ENCODE measurements at regions of chrX and their contacts with region 1.

Region 1: GRCh38 chrX:19840899-19841648 is 46.3 kb downstream of the SH3KBP1 start:
- DNase-seq: peak in 7 of 9 donors; percentile 12 to 48 (median 37)
- ATAC-seq: peak; percentile 87
- H3K4me3 ChIP-seq: peak overlapping the region; percentile 11
- H3K4me3 Mint-ChIP-seq: peak overlapping the region; percentile 22 to 87 (median 78)
- H3K27ac ChIP-seq: peak overlapping the region; percentile 32
- H3K27ac Mint-ChIP-seq: peak overlapping the region; percentile 73 to 94 (median 88)
- H3K4me1 ChIP-seq: peaks cover 7 to 22% of the 10 kb centered on the region in 2 donors
- H3K4me1 Mint-ChIP-seq: peaks cover 20 to 75% (median 65%) of the 10 kb centered on the region in 7 donors
- H3K27me3 ChIP-seq: no peaks in the 10 kb centered on the region
- H3K27me3 Mint-ChIP-seq: no peaks in the 10 kb centered on the region

Region 2: GRCh38 chrX:19772826-19773628 is 68.0 kb before region 1 on chrX:
- CTCF ChIA-PET with region 1: interaction called, 3 read pairs
- POLR2A ChIA-PET with region 1: interaction called, 6 read pairs
- intact Hi-C with region 1: loop called in 1 of 2 experiments (anchors 2 kb)
- DNase-seq: no peak
- ATAC-seq: peak; percentile 36
- H3K4me3 ChIP-seq: no peak overlapping the region
- H3K4me3 Mint-ChIP-seq: peak overlapping the region; percentile 58 to 76 (median 66)
- H3K27ac ChIP-seq: peak overlapping the region; percentile 55
- H3K27ac Mint-ChIP-seq: peak overlapping the region; percentile 78 to 95 (median 88)
- H3K4me1 ChIP-seq: peaks cover 56 to 59% of the 10 kb centered on the region in 2 donors
- H3K4me1 Mint-ChIP-seq: peaks cover 26 to 85% (median 68%) of the 10 kb centered on the region in 7 donors
- H3K27me3 ChIP-seq: no peaks in the 10 kb centered on the region
- H3K27me3 Mint-ChIP-seq: no peaks in the 10 kb centered on the region

Region 3: DNA sequence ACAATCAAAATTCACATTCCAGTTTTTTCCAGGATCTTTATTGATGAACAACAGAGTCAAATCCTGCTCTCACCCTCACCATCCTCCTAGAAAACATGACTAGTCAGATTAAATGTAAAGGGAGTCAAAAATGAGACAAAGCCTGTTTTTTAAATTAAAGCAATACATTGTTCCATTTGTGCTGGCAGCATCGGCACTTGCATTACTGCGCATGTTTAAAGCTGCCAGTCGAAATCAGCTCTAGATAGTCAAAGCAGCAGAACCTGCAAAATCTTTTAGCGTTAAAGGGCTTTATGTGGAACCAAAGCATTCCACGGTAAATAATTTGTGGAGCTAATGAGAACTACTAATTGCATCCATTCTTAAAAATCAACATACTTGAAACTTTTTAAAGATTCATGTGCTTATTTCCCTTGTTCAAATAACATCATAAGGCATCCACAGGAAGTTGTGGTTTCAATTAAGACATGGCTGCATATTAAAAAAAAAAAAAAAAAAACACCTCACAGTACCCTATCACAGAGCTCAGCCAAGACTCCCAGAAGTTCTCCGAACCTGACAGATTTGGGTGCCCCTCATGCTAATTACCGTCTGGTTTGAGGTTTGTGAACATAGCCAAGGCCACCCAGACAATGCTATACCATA is 35.9 kb before region 1 on chrX:
- CTCF ChIA-PET with region 1: interaction called, 3 read pairs
- POLR2A ChIA-PET with region 1: interaction called, 20 read pairs
- intact Hi-C with region 1: no loop called
- DNase-seq: peak in 7 of 9 donors; percentile 29 to 66 (median 46)
- ATAC-seq: peak; percentile 75
- H3K4me3 ChIP-seq: peak overlapping the region; percentile 57
- H3K4me3 Mint-ChIP-seq: peak overlapping the region; percentile 56 to 78 (median 75)
- H3K27ac ChIP-seq: peak overlapping the region; percentile 61
- H3K27ac Mint-ChIP-seq: peak overlapping the region; percentile 81 to 95 (median 89)
- H3K4me1 ChIP-seq: peaks cover 42 to 46% of the 10 kb centered on the region in 2 donors
- H3K4me1 Mint-ChIP-seq: peaks cover 0 to 66% (median 54%) of the 10 kb centered on the region in 7 donors
- H3K27me3 ChIP-seq: no peaks in the 10 kb centered on the region
- H3K27me3 Mint-ChIP-seq: no peaks in the 10 kb centered on the region

Region 4: DNA sequence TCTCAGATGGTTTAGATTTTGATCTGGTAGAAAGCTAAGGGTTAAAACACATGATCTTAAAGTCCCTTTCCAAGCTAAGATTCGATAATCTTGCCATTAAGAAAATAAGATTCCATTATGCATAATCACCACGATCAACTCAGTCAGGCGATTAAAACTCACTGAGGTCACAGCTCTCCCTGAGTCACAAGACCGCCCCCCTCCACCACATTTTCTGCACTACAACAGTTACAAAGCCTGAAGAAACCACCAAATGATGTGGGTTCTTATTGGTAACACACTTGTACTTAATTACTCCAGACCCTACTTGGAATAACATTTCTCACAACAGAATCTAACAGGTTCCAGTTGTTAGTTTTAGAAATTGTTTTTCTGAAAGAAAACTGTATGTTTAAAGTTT is 16.5 kb before region 1 on chrX:
- CTCF ChIA-PET with region 1: interaction called, 5 read pairs
- POLR2A ChIA-PET with region 1: interaction called, 5 read pairs
- intact Hi-C with region 1: loop called in 1 of 2 experiments (anchors 2 kb)
- DNase-seq: peak in 1 of 9 donors; percentile 19
- ATAC-seq: peak; percentile 49
- H3K4me3 ChIP-seq: no peak overlapping the region
- H3K4me3 Mint-ChIP-seq: peak overlapping the region in 4 of 10 donors; percentile 1 to 39 (median 16)
- H3K27ac ChIP-seq: no peak overlapping the region
- H3K27ac Mint-ChIP-seq: peak overlapping the region in 5 of 9 donors; percentile 8 to 62 (median 48)
- H3K4me1 ChIP-seq: peaks cover 12 to 30% of the 10 kb centered on the region in 2 donors
- H3K4me1 Mint-ChIP-seq: peaks cover 12 to 60% (median 43%) of the 10 kb centered on the region in 7 donors
- H3K27me3 ChIP-seq: no peaks in the 10 kb centered on the region
- H3K27me3 Mint-ChIP-seq: no peaks in the 10 kb centered on the region

Region 5: DNA sequence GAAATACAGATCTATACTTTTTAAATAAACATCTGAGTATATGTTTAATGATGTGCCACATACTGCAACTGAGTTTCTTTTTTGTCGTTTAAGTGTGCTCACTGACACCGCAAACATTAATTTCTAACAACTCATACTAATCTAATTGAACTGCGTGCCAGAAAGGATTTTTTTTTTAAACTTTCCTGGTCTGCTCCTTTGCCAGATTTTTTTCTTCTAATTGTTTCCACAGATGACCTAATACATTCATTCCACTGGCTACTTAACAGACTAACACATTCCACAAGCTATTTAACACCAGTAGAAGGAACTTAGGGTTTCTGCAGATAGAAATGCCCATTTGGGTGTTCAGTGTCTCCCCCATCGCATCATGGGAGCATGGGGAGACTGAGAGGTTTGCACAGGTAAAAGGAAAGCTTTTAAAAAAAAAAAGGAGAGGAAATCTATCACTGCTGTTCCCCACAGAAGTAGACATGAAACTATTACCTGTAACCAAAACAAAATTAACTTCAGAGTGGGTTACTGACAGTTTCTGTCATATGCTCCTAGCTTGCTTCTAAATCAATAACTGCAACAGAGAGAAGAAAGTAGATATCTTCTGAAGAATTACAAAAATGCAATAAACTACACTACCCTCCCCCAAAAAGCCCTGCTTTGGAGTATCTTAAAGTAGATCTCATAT is 14.8 kb after region 1 on chrX:
- CTCF ChIA-PET with region 1: interaction called, 3 read pairs
- POLR2A ChIA-PET with region 1: interaction called, 11 read pairs
- intact Hi-C with region 1: loop called in 1 of 2 experiments (anchors 2 kb)
- DNase-seq: no peak
- ATAC-seq: no peak
- H3K4me3 ChIP-seq: peak overlapping the region; percentile 13
- H3K4me3 Mint-ChIP-seq: peak overlapping the region in 9 of 10 donors; percentile 44 to 78 (median 74)
- H3K27ac ChIP-seq: peak overlapping the region; percentile 31
- H3K27ac Mint-ChIP-seq: peak overlapping the region; percentile 53 to 95 (median 85)
- H3K4me1 ChIP-seq: peaks cover 11 to 17% of the 10 kb centered on the region in 2 donors
- H3K4me1 Mint-ChIP-seq: peaks cover 24 to 45% (median 37%) of the 10 kb centered on the region in 7 donors
- H3K27me3 ChIP-seq: no peaks in the 10 kb centered on the region
- H3K27me3 Mint-ChIP-seq: no peaks in the 10 kb centered on the region

Region 6: GRCh38 chrX:19924285-19924684 is 83.2 kb after region 1 on chrX:
- CTCF ChIA-PET with region 1: no interaction called
- POLR2A ChIA-PET with region 1: no interaction called
- intact Hi-C with region 1: no loop called
- DNase-seq: no peak
- ATAC-seq: no peak
- H3K4me3 ChIP-seq: no peak overlapping the region
- H3K4me3 Mint-ChIP-seq: no peak overlapping the region
- H3K27ac ChIP-seq: no peak overlapping the region
- H3K27ac Mint-ChIP-seq: peak overlapping the region in 1 of 9 donors; percentile 38
- H3K4me1 ChIP-seq: no peaks in the 10 kb centered on the region
- H3K4me1 Mint-ChIP-seq: peaks cover 0 to 6% (median 0%) of the 10 kb centered on the region in 7 donors
- H3K27me3 ChIP-seq: no peaks in the 10 kb centered on the region
- H3K27me3 Mint-ChIP-seq: no peaks in the 10 kb centered on the region

Measured in naive thymus-derived CD4-positive, alpha-beta T cell (primary cell).